ENCODE measurements at regions of chr10 and their contacts with region 1.

Region 1: DNA sequence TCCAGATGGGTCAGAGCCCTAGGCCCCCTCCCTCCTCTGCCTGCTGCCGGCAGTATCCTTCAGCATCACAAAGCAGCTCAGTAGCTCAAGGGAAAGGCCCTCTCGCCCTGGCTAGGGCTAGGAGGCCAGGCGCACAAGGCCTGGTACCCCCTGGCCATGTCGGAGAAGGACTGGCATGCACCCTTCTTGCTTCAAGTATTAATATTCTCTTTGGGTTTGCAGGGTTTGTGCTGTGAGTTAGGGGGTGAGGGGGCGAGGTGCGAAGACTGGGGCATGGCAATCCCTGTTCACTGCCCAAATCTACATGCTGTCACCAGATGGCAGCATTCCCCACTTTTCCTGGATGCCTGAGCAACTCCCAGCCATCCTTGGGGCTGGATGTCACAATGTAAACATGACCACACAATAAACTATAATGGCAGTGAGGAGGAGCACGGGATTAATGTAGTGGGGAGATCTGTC is 105.2 kb downstream of the NEURL1 start:
- DNase-seq: peak; percentile 88
- H3K4me3 ChIP-seq: no peak overlapping the region
- H3K27ac ChIP-seq: peak overlapping the region in 1 of 2 experiments; percentile 25; a peak in 1 of 4 replicates
- H3K4me1 ChIP-seq: peaks cover 0 to 10% of the 10 kb centered on the region in 2 experiments; a peak in 2 of 4 replicates
- H3K27me3 ChIP-seq: no peaks in the 10 kb centered on the region
- CTCF ChIP-seq: peak; percentile 80
- EP300 ChIP-seq: no peak
- RAD21 ChIP-seq: peak; percentile 93

Region 2: DNA sequence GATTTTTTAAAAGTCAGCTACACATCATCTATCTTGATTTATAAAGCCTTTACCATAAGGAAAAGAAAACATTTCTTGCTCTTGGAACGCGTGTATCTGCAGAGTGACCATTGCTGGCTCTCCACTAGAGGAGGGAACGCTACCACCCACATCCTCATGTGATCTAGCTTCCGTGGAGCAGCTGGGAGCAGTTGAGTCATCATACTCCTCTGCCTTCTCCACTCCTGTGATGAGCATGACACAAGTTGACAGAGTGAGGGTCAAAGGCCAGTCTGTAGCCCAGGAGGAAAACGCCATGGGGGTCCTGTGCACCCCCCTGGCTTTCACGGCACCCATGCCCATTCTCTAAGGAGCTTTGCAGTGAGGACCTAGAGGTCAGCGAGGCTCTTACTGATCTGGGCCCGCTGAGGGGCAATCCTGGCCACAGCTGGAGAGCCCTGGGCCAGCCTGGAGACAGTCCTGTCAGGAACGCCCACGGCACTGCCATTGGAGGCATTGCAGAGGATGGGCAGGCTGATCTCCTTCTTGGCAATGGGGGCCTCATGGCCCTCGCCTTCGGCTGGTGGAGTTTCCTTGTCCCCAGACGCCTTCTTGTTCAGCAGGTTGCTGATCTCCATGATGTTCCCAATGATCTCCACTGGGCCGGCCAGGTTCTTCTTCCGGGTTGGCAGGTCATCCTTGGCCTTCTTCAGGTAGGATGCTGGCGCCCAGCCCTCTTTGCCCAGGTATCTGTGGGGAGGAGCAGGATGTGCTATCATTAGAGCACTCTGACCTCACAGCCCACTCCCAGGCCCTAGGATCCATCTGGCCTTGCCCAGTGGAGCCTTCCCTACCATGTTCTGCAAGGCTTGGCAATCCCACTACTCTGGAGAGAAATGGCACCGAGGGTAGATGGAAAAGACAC is 14.0 kb after region 1 on chr10:
- CTCF ChIA-PET with region 1: interaction called, 25 read pairs
- POLR2A ChIA-PET with region 1: no interaction called
- DNase-seq: no peak
- H3K4me3 ChIP-seq: no peak overlapping the region
- H3K27ac ChIP-seq: peak overlapping the region in 1 of 2 experiments; percentile 95; a peak in 2 of 4 replicates
- H3K4me1 ChIP-seq: peaks cover 0 to 67% of the 10 kb centered on the region in 2 experiments; a peak in 2 of 4 replicates
- H3K27me3 ChIP-seq: no peaks in the 10 kb centered on the region
- CTCF ChIP-seq: no peak
- EP300 ChIP-seq: no peak
- RAD21 ChIP-seq: no peak

Region 3: GRCh38 chr10:103666087-103666761 is 67.5 kb after region 1 on chr10:
- CTCF ChIA-PET with region 1: interaction called, 20 read pairs
- POLR2A ChIA-PET with region 1: no interaction called
- DNase-seq: peak; percentile 68
- H3K4me3 ChIP-seq: no peak overlapping the region
- H3K27ac ChIP-seq: no peak overlapping the region
- H3K4me1 ChIP-seq: peaks cover 0 to 7% of the 10 kb centered on the region in 2 experiments; a peak in 1 of 4 replicates
- H3K27me3 ChIP-seq: no peaks in the 10 kb centered on the region
- CTCF ChIP-seq: peak; percentile 56
- EP300 ChIP-seq: no peak
- RAD21 ChIP-seq: peak; percentile 46

Region 4: DNA sequence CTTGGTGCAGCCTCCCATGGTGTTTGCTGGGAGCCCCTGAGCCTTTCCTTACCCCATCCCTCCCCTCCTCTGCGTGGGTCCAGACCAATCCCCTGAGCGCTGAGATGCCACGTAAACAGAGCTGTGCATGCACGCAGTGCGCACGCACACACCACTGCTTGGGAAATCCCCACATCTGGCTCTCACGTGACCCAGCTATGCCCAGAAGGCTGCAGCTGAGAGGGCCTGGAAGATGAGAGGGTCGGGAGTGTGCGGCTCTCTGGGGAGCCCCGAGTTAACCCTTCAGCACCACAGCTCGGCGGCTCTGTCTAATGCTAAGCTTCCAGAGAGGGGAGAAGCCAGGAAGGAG is 79.5 kb after region 1 on chr10:
- CTCF ChIA-PET with region 1: interaction called, 129 read pairs
- POLR2A ChIA-PET with region 1: no interaction called
- DNase-seq: peak; percentile 94
- H3K4me3 ChIP-seq: no peak overlapping the region
- H3K27ac ChIP-seq: peak overlapping the region; percentile 70 to 77
- H3K4me1 ChIP-seq: peaks cover 0 to 22% of the 10 kb centered on the region in 2 experiments; a peak in 1 of 4 replicates
- H3K27me3 ChIP-seq: no peaks in the 10 kb centered on the region
- CTCF ChIP-seq: no peak
- EP300 ChIP-seq: peak in 1 of 2 experiments; percentile 55; a peak in 1 of 4 replicates
- RAD21 ChIP-seq: no peak

Region 5: GRCh38 chr10:103703941-103704919 is 105.5 kb after region 1 on chr10:
- CTCF ChIA-PET with region 1: interaction called, 30 read pairs
- POLR2A ChIA-PET with region 1: no interaction called
- DNase-seq: no peak
- H3K4me3 ChIP-seq: no peak overlapping the region
- H3K27ac ChIP-seq: peak overlapping the region in 1 of 2 experiments; percentile 45; a peak in 1 of 4 replicates
- H3K4me1 ChIP-seq: peaks cover 4 to 28% of the 10 kb centered on the region in 2 experiments; a peak in 2 of 4 replicates
- H3K27me3 ChIP-seq: no peaks in the 10 kb centered on the region
- CTCF ChIP-seq: no peak
- EP300 ChIP-seq: no peak
- RAD21 ChIP-seq: no peak